ENCODE measurements at regions of chr4 and their contacts with region 1.

Region 1: GRCh38 chr4:14749910-14750309 is 252.4 kb upstream of the CPEB2 start:
- DNase-seq: peak; percentile 47
- H3K4me3 ChIP-seq: no peak overlapping the region
- H3K27ac ChIP-seq: no peak overlapping the region
- H3K4me1 ChIP-seq: no peaks in the 10 kb centered on the region
- H3K27me3 ChIP-seq: no peaks in the 10 kb centered on the region
- CTCF ChIP-seq: peak; percentile 41 to 76

Region 2: GRCh38 chr4:15020502-15021286 is 270.8 kb after region 1 on chr4:
- CTCF ChIA-PET with region 1: no interaction called
- dilution Hi-C with region 1: no loop called
- in situ Hi-C with region 1: no loop called
- intact Hi-C with region 1: no loop called
- DNase-seq: no peak
- H3K4me3 ChIP-seq: no peak overlapping the region
- H3K27ac ChIP-seq: no peak overlapping the region
- H3K4me1 ChIP-seq: no peaks in the 10 kb centered on the region
- H3K27me3 ChIP-seq: no peaks in the 10 kb centered on the region
- CTCF ChIP-seq: no peak

Region 3: GRCh38 chr4:15149839-15150476 is 400.0 kb after region 1 on chr4:
- CTCF ChIA-PET with region 1: no interaction called
- dilution Hi-C with region 1: no loop called
- in situ Hi-C with region 1: loop called in 1 of 2 experiments (anchors 25 kb)
- intact Hi-C with region 1: no loop called
- DNase-seq: peak; percentile 49
- H3K4me3 ChIP-seq: no peak overlapping the region
- H3K27ac ChIP-seq: no peak overlapping the region
- H3K4me1 ChIP-seq: peaks cover 12% of the 10 kb centered on the region
- H3K27me3 ChIP-seq: no peaks in the 10 kb centered on the region
- CTCF ChIP-seq: peak in 1 of 2 donors; percentile 21

Region 4: DNA sequence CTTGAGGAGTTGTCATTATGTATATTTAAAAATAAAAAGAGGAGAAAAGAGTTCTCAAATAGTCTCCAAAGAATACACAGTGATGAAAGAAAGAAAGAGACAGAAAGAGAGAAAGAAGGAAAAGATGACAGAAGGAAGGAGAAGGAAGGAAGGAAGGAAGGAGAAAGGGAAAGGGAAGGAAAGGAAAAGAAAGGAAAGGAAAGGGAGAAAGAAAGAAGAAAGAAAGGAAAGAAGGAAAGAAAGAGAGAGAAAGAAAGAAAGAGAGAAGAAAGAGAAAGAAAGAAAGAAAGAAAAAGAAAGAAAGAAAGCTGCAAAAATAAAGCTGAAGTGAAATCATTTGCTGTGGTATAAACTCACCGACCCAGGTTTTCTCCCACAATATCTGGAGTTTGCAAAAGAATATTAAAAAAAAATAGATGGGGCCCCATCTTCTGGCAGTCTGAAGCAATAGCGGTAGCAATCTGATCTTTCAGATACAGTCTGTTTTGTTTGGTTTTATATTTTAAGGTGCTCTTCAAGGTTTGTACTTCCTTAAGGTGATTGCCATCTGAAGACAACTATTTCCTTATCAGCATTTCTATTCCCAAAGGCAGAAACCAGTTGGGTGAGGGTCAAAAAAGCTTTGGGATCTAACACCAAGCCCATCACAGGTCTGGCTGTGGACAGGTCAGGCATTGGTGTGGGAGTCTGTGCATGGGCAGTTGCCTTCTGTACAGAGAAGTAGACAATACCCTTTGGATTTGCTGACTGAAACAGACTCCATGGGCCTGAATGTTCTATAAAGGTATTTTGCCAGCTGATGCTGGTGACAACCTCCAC is 412.8 kb after region 1 on chr4:
- CTCF ChIA-PET with region 1: no interaction called
- dilution Hi-C with region 1: no loop called
- in situ Hi-C with region 1: loop called in 1 of 2 experiments (anchors 25 kb)
- intact Hi-C with region 1: loop called (anchors 1 kb)
- DNase-seq: no peak
- H3K4me3 ChIP-seq: no peak overlapping the region
- H3K27ac ChIP-seq: no peak overlapping the region
- H3K4me1 ChIP-seq: no peaks in the 10 kb centered on the region
- H3K27me3 ChIP-seq: peaks cover 3% of the 10 kb centered on the region
- CTCF ChIP-seq: peak; percentile 23 to 53

Measured in mammary epithelial cell (primary cell).